H1 (cell line): ENCODE measurements at regions of chr12 and their contacts with region 1.

Region 1: GRCh38 chr12:100348657-100349454 is 8.0 kb upstream of the SLC17A8 start:
- DNase-seq: no peak
- H3K4me3 ChIP-seq: no peak overlapping the region
- H3K27ac ChIP-seq: no peak overlapping the region
- H3K4me1 ChIP-seq: no peaks in the 10 kb centered on the region
- H3K27me3 ChIP-seq: no peaks in the 10 kb centered on the region
- CTCF ChIP-seq: peak in 2 of 3 experiments; percentile 36 to 51; a peak in 2 of 4 replicates
- EP300 ChIP-seq: no peak
- POLR2A ChIP-seq: no peak
- RAD21 ChIP-seq: peak; percentile 83 to 89

Region 2: GRCh38 chr12:100364324-100364723 is 15.5 kb after region 1 on chr12:
- CTCF ChIA-PET with region 1: interaction called, 18 read pairs
- POLR2A ChIA-PET with region 1: no interaction called
- DNase-seq: no peak
- H3K4me3 ChIP-seq: no peak overlapping the region
- H3K27ac ChIP-seq: no peak overlapping the region
- H3K4me1 ChIP-seq: no peaks in the 10 kb centered on the region
- H3K27me3 ChIP-seq: no peaks in the 10 kb centered on the region
- CTCF ChIP-seq: no peak
- EP300 ChIP-seq: no peak
- POLR2A ChIP-seq: no peak
- RAD21 ChIP-seq: no peak

Region 3: GRCh38 chr12:100399095-100399494 is 50.2 kb after region 1 on chr12:
- CTCF ChIA-PET with region 1: interaction called, 92 read pairs
- POLR2A ChIA-PET with region 1: no interaction called
- DNase-seq: no peak
- H3K4me3 ChIP-seq: no peak overlapping the region
- H3K27ac ChIP-seq: no peak overlapping the region
- H3K4me1 ChIP-seq: peaks cover 0 to 3% (median 1%) of the 10 kb centered on the region in 4 experiments; a peak in 4 of 7 replicates
- H3K27me3 ChIP-seq: no peaks in the 10 kb centered on the region
- CTCF ChIP-seq: no peak
- EP300 ChIP-seq: no peak
- POLR2A ChIP-seq: no peak
- RAD21 ChIP-seq: no peak

Region 4: DNA sequence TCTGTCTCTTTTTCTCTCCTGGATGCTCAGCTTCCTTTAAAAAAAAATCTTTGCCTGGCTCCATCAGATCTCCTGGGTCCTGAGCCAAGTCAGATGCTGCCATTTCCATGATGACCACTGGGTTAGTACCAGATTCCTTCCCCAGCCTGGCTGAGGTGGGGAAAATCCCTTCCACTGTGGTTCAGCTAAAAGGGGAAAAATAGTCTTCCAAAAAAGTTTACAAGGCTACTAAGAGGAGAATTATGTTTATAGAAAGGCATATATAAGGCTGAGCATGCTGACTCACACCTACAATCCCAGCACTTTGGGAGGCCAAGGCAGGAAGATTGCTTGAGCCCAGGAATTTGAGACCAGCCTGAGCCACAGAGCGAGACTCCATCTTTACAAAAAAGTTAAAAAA is 196.2 kb after region 1 on chr12:
- CTCF ChIA-PET with region 1: interaction called, 34 read pairs
- POLR2A ChIA-PET with region 1: no interaction called
- DNase-seq: no peak
- H3K4me3 ChIP-seq: no peak overlapping the region
- H3K27ac ChIP-seq: no peak overlapping the region
- H3K4me1 ChIP-seq: no peaks in the 10 kb centered on the region
- H3K27me3 ChIP-seq: no peaks in the 10 kb centered on the region
- CTCF ChIP-seq: no peak
- EP300 ChIP-seq: no peak
- POLR2A ChIP-seq: no peak
- RAD21 ChIP-seq: no peak